HepG2 (cell line): ENCODE measurements at regions of chr6 and their contacts with region 1.

Region 1: GRCh38 chr6:55617272-55617671 is 38.3 kb upstream of the HMGCLL1 start:
- DNase-seq: peak; percentile 48
- ATAC-seq: peak; percentile 98
- H3K4me3 ChIP-seq: no peak overlapping the region
- H3K27ac ChIP-seq: no peak overlapping the region
- H3K4me1 ChIP-seq: no peaks in the 10 kb centered on the region
- H3K27me3 ChIP-seq: no peaks in the 10 kb centered on the region
- CTCF ChIP-seq: peak; percentile 81
- EP300 ChIP-seq: no peak
- POLR2A ChIP-seq: no peak
- RAD21 ChIP-seq: 0 out of 2 replicates have a peak, but pooled peaks have one; percentile 17

Region 2: DNA sequence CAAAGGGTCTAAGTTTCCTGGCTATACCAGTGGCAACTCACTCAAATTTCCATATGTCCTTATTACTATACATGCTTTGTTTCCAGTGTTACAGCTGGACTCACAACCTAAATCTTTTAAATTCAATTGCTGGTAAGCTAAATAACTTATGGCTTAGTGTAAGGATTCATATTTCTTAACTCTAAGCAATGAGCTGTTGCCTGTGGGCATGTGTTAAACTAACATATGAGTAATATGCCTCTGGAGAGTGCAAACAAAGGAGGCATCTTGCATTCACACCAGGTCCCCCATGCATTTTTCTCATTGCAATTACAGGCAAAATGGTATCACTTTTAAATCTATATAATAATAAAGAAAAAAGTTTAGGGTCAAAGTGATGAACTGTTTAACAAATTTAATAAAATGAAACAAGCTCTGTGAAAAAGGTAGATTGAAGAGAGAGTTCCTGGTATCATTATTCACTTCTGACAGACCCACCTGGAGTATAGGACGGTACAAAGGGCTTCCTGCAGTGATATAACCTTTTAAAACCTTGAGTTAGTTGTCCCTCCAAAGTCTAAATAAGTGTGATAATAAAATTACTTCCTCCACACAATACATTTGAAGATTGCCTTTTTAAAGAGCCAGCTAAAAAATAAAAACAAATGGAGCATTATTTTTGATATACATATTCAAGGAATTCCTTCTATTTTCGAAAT is 19.3 kb after region 1 on chr6:
- CTCF ChIA-PET with region 1: no interaction called
- POLR2A ChIA-PET with region 1: no interaction called
- in situ Hi-C with region 1: no loop called
- intact Hi-C with region 1: no loop called
- DNase-seq: no peak
- ATAC-seq: no peak
- H3K4me3 ChIP-seq: no peak overlapping the region
- H3K27ac ChIP-seq: no peak overlapping the region
- H3K4me1 ChIP-seq: no peaks in the 10 kb centered on the region
- H3K27me3 ChIP-seq: no peaks in the 10 kb centered on the region
- CTCF ChIP-seq: no peak
- EP300 ChIP-seq: no peak
- POLR2A ChIP-seq: no peak
- RAD21 ChIP-seq: no peak

Region 3: GRCh38 chr6:55886185-55886836 is 269.0 kb after region 1 on chr6:
- CTCF ChIA-PET with region 1: interaction called, 16 read pairs
- POLR2A ChIA-PET with region 1: no interaction called
- in situ Hi-C with region 1: loop called (anchors 10 kb)
- intact Hi-C with region 1: loop called (anchors 1 kb)
- DNase-seq: peak; percentile 64
- ATAC-seq: peak; percentile 72
- H3K4me3 ChIP-seq: 0 out of 6 replicates have a peak overlapping the region, but pooled peaks of 1 of the 3 experiments have one; percentile 20
- H3K27ac ChIP-seq: no peak overlapping the region
- H3K4me1 ChIP-seq: peaks cover 15% of the 10 kb centered on the region
- H3K27me3 ChIP-seq: peaks cover 0 to 3% of the 10 kb centered on the region in 2 experiments; a peak in 1 of 5 replicates
- CTCF ChIP-seq: peak; percentile 37
- EP300 ChIP-seq: no peak; a peak in 1 of 4 replicates
- POLR2A ChIP-seq: no peak
- RAD21 ChIP-seq: no peak

Region 4: GRCh38 chr6:55941702-55942101 is 324.4 kb after region 1 on chr6:
- CTCF ChIA-PET with region 1: interaction called, 4 read pairs
- POLR2A ChIA-PET with region 1: no interaction called
- in situ Hi-C with region 1: no loop called
- intact Hi-C with region 1: loop called (anchors 1 kb)
- DNase-seq: no peak
- ATAC-seq: no peak
- H3K4me3 ChIP-seq: no peak overlapping the region
- H3K27ac ChIP-seq: no peak overlapping the region
- H3K4me1 ChIP-seq: no peaks in the 10 kb centered on the region
- H3K27me3 ChIP-seq: no peaks in the 10 kb centered on the region
- CTCF ChIP-seq: peak; percentile 33
- EP300 ChIP-seq: no peak
- POLR2A ChIP-seq: no peak
- RAD21 ChIP-seq: no peak

Region 5: GRCh38 chr6:55953335-55953734 is 336.1 kb after region 1 on chr6:
- CTCF ChIA-PET with region 1: interaction called, 9 read pairs
- POLR2A ChIA-PET with region 1: no interaction called
- in situ Hi-C with region 1: no loop called
- intact Hi-C with region 1: loop called (anchors 1 kb)
- DNase-seq: peak; percentile 6
- ATAC-seq: peak; percentile 55; the same call in 2 of the 3 replicates
- H3K4me3 ChIP-seq: no peak overlapping the region
- H3K27ac ChIP-seq: no peak overlapping the region
- H3K4me1 ChIP-seq: no peaks in the 10 kb centered on the region
- H3K27me3 ChIP-seq: no peaks in the 10 kb centered on the region
- CTCF ChIP-seq: peak; percentile 52
- EP300 ChIP-seq: no peak
- POLR2A ChIP-seq: no peak
- RAD21 ChIP-seq: no peak